ENCODE measurements at regions of chr7 and their contacts with region 1.

Region 1: GRCh38 chr7:143214789-143215679 is 6.8 kb upstream of the TAS2R40 start:
- DNase-seq: no peak

Region 2: DNA sequence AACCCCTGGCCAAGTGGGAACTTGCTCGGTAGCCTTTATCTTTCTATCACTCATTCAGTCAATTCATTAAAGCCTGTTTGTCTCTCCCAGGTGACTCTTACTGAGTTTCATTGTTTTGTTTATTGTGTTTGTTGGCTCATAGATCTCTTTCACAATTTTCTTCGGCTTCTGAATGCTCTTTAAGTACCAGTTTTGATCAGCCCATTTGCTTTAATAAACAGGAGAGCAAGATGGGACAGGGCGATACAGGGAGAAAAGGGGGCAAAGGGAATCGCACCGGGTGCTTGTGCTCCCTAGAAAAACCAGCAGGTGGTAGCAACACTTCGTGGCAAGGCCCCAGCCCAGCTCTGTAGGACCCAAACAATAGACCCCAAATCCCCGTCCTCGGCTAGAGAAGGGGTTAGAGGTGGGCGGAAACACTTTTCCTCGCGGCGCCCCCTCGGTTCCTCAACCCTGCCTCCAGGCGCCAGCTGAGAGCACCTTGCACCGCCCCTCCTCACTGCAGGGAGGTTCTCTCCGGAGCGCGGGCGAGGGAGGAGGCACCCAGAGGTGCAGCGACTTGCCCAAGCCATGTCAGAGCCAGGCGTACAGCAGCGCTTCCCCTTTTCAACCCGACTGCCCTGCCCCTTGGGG is 361.2 kb before region 1 on chr7:
- intact Hi-C with region 1: loop called (anchors 10 kb)
- DNase-seq: peak; percentile 88

Region 3: GRCh38 chr7:143008007-143008901 is 206.8 kb before region 1 on chr7:
- intact Hi-C with region 1: loop called (anchors 2 to 5 kb)
- DNase-seq: peak; percentile 95

Region 4: GRCh38 chr7:143013893-143014292 is 201.1 kb before region 1 on chr7:
- intact Hi-C with region 1: loop called (anchors 2 to 5 kb)
- DNase-seq: no peak

Region 5: GRCh38 chr7:143458263-143458662 is 243.2 kb after region 1 on chr7:
- intact Hi-C with region 1: no loop called
- DNase-seq: no peak